ENCODE measurements at regions of chr18 and their contacts with region 1.

Region 1: GRCh38 chr18:48951448-48952286 is 902 bp upstream of the SMAD7 start:
- DNase-seq: peak; percentile 95
- H3K4me3 ChIP-seq: peak overlapping the region; percentile 76 to 96 (median 93)
- H3K27ac ChIP-seq: peak overlapping the region; percentile 93 to 99 (median 97)
- H3K4me1 ChIP-seq: peaks cover 0 to 50% (median 40%) of the 10 kb centered on the region in 4 donors
- H3K27me3 ChIP-seq: no peaks in the 10 kb centered on the region
- CTCF ChIP-seq: peak in 1 of 4 experiments; percentile 45
- EP300 ChIP-seq: peak in 1 of 4 donors; percentile 24
- POLR2A ChIP-seq: peak in 1 of 2 donors; percentile 15

Region 2: GRCh38 chr18:48782381-48782841 is 169.3 kb before region 1 on chr18:
- intact Hi-C with region 1: loop called (anchors 1 kb)
- DNase-seq: peak; percentile 81
- H3K4me3 ChIP-seq: no peak overlapping the region
- H3K27ac ChIP-seq: peak overlapping the region; percentile 74 to 91 (median 81)
- H3K4me1 ChIP-seq: peaks cover 0 to 76% (median 49%) of the 10 kb centered on the region in 4 donors
- H3K27me3 ChIP-seq: no peaks in the 10 kb centered on the region
- CTCF ChIP-seq: no peak
- EP300 ChIP-seq: no peak
- POLR2A ChIP-seq: no peak

Region 3: GRCh38 chr18:48827291-48828193 is 124.1 kb before region 1 on chr18:
- intact Hi-C with region 1: loop called (anchors 5 kb)
- DNase-seq: peak; percentile 61
- H3K4me3 ChIP-seq: peak overlapping the region in 3 of 4 donors; percentile 2 to 13 (median 9)
- H3K27ac ChIP-seq: peak overlapping the region; percentile 29 to 77 (median 57)
- H3K4me1 ChIP-seq: peaks cover 0 to 50% (median 33%) of the 10 kb centered on the region in 4 donors
- H3K27me3 ChIP-seq: no peaks in the 10 kb centered on the region
- CTCF ChIP-seq: no peak
- EP300 ChIP-seq: no peak
- POLR2A ChIP-seq: no peak

Region 4: GRCh38 chr18:48975649-48976204 is 24.1 kb after region 1 on chr18:
- intact Hi-C with region 1: loop called (anchors 1 kb)
- DNase-seq: no peak
- H3K4me3 ChIP-seq: peak overlapping the region; percentile 51 to 93 (median 60)
- H3K27ac ChIP-seq: peak overlapping the region; percentile 59 to 86 (median 68)
- H3K4me1 ChIP-seq: peaks cover 0 to 14% (median 8%) of the 10 kb centered on the region in 4 donors
- H3K27me3 ChIP-seq: no peaks in the 10 kb centered on the region
- CTCF ChIP-seq: no peak
- EP300 ChIP-seq: no peak
- POLR2A ChIP-seq: no peak

Region 5: GRCh38 chr18:49041435-49042245 is 90.0 kb after region 1 on chr18:
- intact Hi-C with region 1: loop called (anchors 5 kb)
- DNase-seq: peak; percentile 80
- H3K4me3 ChIP-seq: no peak overlapping the region
- H3K27ac ChIP-seq: no peak overlapping the region
- H3K4me1 ChIP-seq: peaks cover 0 to 8% (median 0%) of the 10 kb centered on the region in 4 donors
- H3K27me3 ChIP-seq: no peaks in the 10 kb centered on the region
- CTCF ChIP-seq: peak; percentile 36 to 68 (median 48)
- EP300 ChIP-seq: no peak
- POLR2A ChIP-seq: no peak

Region 6: GRCh38 chr18:49813319-49814146 is 861.9 kb after region 1 on chr18 and contains the start of gene ACAA2:
- intact Hi-C with region 1: loop called (anchors 10 kb)
- DNase-seq: peak; percentile 95
- H3K4me3 ChIP-seq: peak within 1 kb of the TSS; percentile 71 to 89 (median 82)
- H3K27ac ChIP-seq: peak within 1 kb of the TSS; percentile 91 to 96 (median 94)
- H3K4me1 ChIP-seq: peaks cover 0 to 28% (median 23%) of the 10 kb centered on the region in 4 donors
- H3K27me3 ChIP-seq: no peaks in the 10 kb centered on the region
- CTCF ChIP-seq: no peak
- EP300 ChIP-seq: no peak
- POLR2A ChIP-seq: peak; percentile 55 to 72
- total RNA-seq, gene ACAA2: 61.8 to 87.7 (median 63.2) TPM

Region 7: DNA sequence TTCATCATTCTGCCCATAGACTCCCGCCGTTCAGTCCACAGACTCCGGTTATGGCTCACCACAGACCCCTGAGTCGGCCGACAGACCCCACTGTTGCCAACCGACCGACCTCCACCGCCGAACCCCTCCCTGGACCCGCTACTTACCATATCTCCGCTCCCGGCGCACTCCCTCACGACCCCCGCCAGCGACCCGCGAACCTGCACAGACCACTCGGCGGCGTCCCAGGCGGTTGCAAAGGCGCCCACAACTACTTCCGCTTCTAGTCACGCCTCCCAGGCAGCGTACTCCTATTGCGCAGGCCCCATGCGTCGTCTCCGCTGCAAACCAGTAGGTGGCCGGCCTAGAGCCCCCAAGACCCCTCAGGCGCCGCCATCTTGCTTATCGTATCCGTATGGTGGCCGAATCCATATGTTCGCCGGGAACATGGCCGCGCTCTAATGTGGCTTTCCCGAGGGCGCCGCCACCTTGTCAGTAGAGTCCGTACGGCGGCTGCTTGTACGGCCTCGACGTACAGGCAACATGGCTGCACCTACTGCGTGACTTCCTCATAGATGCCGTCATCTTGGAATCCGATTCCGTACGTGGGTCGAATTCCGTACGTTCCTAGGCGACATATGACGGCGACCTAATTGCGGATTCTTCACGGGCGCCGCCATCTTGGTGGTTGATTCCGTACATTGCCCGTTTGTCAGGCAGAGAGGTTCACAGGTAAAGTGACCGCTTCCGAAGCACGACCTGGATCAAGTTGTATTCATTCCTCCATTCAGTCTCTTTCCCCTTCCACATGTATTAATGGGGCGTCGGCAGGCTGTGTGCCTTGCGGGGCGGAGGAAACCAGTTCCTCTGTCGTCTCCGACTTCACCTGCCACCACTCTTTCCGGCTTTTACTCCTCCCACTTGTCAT is 1336.0 kb after region 1 on chr18 and contains the start of gene CXXC1:
- intact Hi-C with region 1: loop called (anchors 10 kb)
- DNase-seq: peak; percentile 99
- H3K4me3 ChIP-seq: peak within 1 kb of the TSS; percentile 68 to 85 (median 75)
- H3K27ac ChIP-seq: peak within 1 kb of the TSS; percentile 81 to 88 (median 86)
- H3K4me1 ChIP-seq: peaks cover 0 to 12% (median 8%) of the 10 kb centered on the region in 4 donors
- H3K27me3 ChIP-seq: no peaks in the 10 kb centered on the region
- CTCF ChIP-seq: peak; percentile 43 to 49 (median 47)
- EP300 ChIP-seq: peak in 1 of 4 donors; percentile 11
- POLR2A ChIP-seq: peak in 1 of 2 donors; percentile 22
- total RNA-seq, gene CXXC1: 34.2 to 58.9 (median 51.1) TPM